ENCODE measurements at regions of chr14 and their contacts with region 1.

Region 1: DNA sequence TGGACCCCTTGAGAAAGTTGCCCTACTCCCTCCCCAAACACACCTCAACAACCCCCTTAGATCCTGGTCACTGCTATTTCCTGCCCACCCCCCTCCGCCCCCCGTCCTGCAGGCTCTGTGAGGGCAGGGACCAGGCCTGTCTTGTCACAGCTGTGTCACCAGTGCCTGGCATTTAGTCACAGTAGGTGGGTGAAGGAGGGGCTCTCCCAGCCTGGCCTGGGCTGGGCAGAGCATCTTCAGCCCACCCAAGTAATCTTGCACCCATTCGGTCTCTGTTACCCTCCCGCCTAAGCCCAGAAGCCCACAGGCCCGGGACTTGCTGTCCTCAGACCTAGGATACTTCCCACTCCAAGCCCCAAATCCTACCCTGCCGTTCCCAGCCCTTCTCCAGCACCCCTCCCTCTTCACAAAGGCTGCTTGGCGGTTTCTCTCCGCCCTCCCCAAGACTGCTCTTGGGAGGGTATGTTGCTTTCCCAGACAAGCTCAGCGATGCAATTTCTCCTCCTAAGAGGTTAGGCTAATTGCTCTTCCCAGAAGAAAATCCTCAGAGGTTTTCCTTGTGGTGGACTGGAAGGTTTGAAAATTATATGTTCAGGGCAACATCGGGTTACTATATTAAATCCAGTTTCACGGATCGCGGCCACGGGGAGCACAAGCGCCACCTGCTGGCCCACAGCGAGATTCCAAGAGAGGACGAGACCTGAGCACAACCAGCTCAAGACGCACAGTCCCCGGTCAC is 50.8 kb upstream of the ZFP36L1 start:
- DNase-seq: no peak
- H3K4me3 ChIP-seq: no peak overlapping the region
- CTCF ChIP-seq: peak; percentile 94

Region 2: DNA sequence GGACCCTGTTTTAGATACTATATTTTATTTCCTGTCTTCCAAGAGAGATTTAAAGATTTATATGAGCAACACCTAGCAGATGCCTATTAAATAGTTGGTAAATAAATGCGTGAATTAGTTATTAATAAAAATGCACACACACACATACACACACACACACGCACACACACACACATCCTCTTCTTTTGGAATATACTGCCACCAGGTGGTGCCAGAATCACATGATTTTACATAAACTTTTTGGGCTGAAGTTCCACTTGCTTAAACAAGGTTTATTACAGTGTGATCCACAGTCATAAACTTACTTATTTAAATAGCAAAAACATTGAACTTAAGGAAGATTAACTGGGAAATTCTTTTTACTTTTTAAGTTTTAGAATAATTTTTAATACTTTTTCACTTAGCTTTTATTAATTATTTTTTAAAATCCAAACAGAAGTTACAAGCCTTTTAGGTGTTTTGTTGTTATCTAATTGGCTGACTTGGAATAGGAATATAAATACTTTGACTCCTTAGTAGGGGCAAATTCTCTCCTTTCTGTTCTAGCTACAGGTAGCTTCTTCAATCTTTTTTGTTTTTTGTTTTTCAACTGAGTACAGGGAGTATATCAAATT is 1006.5 kb before region 1 on chr14:
- CTCF ChIA-PET with region 1: interaction called, 12 read pairs
- POLR2A ChIA-PET with region 1: no interaction called
- DNase-seq: peak; percentile 54
- H3K4me3 ChIP-seq: no peak overlapping the region
- CTCF ChIP-seq: peak; percentile 64

Region 3: GRCh38 chr14:67919259-67920032 is 924.2 kb before region 1 on chr14:
- CTCF ChIA-PET with region 1: interaction called, 14 read pairs
- POLR2A ChIA-PET with region 1: no interaction called
- DNase-seq: no peak
- H3K4me3 ChIP-seq: no peak overlapping the region
- CTCF ChIP-seq: no peak

Region 4: GRCh38 chr14:67943947-67944346 is 899.7 kb before region 1 on chr14:
- CTCF ChIA-PET with region 1: interaction called, 17 read pairs
- POLR2A ChIA-PET with region 1: no interaction called
- DNase-seq: no peak
- H3K4me3 ChIP-seq: no peak overlapping the region
- CTCF ChIP-seq: peak; percentile 43

Region 5: DNA sequence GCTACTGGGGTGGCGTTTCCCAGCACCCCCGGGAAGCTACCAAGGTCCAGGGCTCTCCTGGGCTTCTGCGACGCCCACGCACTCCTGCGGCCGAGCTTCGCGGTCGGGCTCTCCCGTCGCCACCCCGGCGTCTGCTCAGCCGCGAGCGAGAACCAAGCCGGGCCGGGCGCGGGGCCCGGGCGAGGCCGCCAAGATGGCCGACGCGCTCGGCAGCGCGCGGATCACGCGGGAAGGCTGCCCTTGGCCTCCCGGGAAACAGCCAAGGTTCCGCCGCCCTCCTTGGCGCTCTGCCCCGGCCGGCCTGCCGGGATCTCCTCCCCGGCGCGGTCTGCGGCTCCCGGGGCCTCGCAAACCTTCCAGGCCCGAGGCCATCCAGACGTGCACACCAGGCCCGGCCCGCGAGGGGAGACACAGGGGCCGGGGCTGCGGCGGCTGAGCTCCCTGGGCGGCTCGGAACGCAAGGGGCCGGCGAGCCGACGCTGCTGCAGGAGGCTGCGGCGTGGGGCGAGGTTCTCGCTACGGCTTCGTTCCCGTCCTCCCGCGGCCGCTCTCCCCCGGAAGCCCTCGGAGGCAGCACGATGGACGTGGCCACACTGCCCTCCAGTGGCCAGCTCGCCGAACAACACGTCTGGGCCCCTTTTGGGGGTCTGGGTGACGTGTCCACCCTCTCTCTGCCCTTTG is 27.2 kb before region 1 on chr14:
- CTCF ChIA-PET with region 1: interaction called, 27 read pairs
- POLR2A ChIA-PET with region 1: no interaction called
- DNase-seq: no peak
- H3K4me3 ChIP-seq: peak overlapping the region; percentile 49
- CTCF ChIP-seq: peak; percentile 96

Region 6: GRCh38 chr14:68854421-68854820 is 10.8 kb after region 1 on chr14:
- CTCF ChIA-PET with region 1: interaction called, 29 read pairs
- POLR2A ChIA-PET with region 1: no interaction called
- DNase-seq: no peak
- H3K4me3 ChIP-seq: no peak overlapping the region
- CTCF ChIP-seq: no peak